ENCODE measurements at regions of chr18 and their contacts with region 1.

Region 1: DNA sequence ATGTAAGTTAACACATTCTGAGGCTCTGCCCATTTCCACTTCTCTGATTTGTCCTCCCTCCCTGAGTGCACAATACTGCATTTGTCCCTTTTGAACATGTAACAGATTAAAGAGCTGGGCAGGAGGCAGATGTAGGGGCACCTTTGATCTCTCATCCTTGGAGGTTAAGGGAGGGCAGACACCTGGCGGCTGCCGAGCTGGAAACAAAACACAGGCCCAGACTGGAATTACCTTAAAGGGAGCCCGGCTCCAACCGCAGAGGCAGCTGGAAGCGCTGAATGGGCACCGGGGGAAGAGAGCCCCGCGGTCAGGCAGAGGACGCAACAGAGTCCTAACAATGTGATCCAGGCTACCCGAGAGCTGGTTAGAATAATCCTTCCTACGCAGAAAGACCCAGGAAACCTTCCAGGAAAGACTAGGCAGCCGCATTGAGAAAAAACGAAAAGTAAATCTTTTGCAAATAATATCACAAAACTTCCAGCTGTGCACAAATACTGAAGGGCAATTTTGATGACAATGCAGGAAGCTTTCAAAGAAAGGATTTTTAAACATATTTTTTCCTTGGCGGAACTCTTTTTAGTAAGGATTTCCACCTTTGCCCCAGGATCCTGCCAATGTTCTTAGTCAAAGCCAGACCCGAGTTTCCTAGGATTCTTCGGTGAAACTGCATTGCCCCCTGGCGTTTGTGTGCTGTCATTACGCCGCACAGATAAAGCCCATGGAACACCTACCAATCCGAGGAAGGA is 216.0 kb downstream of the TGIF1 start:
- DNase-seq: peak; percentile 31 to 90
- H3K4me3 ChIP-seq: peak overlapping the region; percentile 32 to 51
- H3K27ac ChIP-seq: peak overlapping the region; percentile 36 to 68
- H3K4me1 ChIP-seq: peaks cover 0 to 5% of the 10 kb centered on the region in 2 donors
- H3K27me3 ChIP-seq: no peaks in the 10 kb centered on the region
- CTCF ChIP-seq: peak; percentile 88 to 93 (median 92)

Region 2: DNA sequence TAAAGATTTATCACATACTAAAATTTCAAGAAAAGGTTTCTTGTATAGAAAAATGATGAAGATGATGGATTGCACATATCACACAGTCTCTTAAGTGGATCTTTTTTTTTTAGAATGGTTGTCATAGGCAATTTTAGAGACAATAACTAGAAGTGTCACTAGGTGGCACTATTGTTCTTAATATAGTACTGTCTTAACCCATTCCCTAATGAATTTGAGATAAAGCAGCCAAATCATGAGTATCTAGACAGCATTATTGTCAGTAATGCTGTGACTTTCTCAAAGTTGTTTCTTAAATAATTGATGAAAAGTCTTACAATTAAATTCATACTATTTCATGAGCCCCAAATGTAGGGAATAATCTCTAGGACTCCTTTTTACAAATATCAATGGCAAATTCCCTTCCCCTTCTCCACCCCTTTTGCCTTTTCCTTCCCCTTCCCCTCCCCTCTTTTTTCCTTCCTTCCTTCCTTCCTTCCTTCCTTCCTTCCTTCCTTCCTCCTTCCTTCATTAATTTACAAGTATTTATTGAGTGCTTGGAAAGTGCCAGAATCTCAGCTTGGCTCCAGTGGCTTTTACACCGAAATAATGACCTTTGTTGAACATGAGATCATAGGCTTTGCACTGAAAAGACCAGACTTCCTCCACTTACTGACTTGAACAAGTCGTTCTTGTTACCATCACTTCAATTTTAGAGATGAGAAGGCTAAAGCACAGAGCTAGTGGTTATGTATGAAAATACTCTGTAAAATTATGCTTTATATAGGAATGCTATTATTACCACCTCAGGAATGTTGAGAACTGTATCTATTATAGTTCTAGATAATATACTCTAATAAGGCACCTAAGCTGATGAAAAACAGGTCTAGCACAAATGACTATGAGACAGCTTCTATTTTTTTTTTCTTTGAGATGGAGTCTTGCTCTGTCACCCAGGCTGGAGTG is 384.2 kb before region 1 on chr18:
- intact Hi-C with region 1: loop called (anchors 1 kb)
- DNase-seq: no peak
- H3K4me3 ChIP-seq: no peak overlapping the region
- H3K27ac ChIP-seq: no peak overlapping the region
- H3K4me1 ChIP-seq: peaks cover 0 to 3% of the 10 kb centered on the region in 2 donors
- H3K27me3 ChIP-seq: no peaks in the 10 kb centered on the region
- CTCF ChIP-seq: peak; percentile 54 to 71 (median 69)

Region 3: GRCh38 chr18:3454365-3455089 is 211.4 kb before region 1 on chr18:
- intact Hi-C with region 1: loop called (anchors 5 kb)
- DNase-seq: no peak
- H3K4me3 ChIP-seq: peak overlapping the region; percentile 79 to 86
- H3K27ac ChIP-seq: peak overlapping the region; percentile 81 to 100
- H3K4me1 ChIP-seq: peaks cover 3 to 25% of the 10 kb centered on the region in 2 donors
- H3K27me3 ChIP-seq: no peaks in the 10 kb centered on the region
- CTCF ChIP-seq: peak; percentile 54 to 65 (median 60)

Region 4: GRCh38 chr18:3466045-3466444 is 199.9 kb before region 1 on chr18:
- intact Hi-C with region 1: no loop called
- DNase-seq: no peak
- H3K4me3 ChIP-seq: no peak overlapping the region
- H3K27ac ChIP-seq: no peak overlapping the region
- H3K4me1 ChIP-seq: no peaks in the 10 kb centered on the region
- H3K27me3 ChIP-seq: no peaks in the 10 kb centered on the region
- CTCF ChIP-seq: no peak